SK-N-SH (cell line): ENCODE measurements at regions of chr2 and their contacts with region 1.

Region 1: DNA sequence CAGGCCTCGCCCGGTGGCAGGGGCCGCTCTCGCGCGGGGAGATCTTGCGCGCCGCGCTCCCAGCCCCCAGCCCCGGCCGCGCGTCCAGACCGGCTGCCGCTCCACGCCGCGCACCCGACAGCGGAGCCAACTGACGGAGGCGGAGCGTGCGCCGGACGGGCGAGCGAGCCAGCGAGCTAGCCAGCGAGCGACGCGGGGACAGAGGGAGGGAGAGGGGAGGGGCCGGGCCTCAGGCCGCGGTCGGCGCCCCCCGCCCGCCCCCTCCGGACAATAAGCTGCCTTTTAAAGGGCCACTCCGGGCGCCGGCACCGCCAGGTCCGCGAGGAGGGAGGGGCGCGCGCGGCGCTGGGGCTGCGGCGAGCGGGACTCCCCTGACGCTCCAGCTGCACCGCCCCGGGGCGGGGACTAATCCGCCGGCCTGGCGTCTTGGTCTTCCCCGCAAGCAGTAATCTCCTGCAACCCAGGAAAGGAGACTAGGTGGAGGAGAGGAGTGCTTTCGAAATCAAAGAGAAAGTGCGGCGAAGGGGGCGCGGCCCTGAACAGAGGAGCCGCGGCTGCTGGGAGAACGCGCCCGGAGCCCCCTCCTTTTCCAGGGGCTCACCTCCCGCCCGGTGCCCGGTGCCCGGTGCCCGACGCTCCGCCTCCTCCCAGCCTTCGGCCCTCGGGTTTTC is at the start of gene BIN1:
- DNase-seq: peak; percentile 92
- H3K4me3 ChIP-seq: peak within 1 kb of the TSS; percentile 76 to 87
- H3K27ac ChIP-seq: peak within 1 kb of the TSS; percentile 60 to 90
- H3K4me1 ChIP-seq: peaks cover 17 to 45% of the 10 kb centered on the region in 2 experiments
- H3K27me3 ChIP-seq: no peaks in the 10 kb centered on the region
- CTCF ChIP-seq: no peak
- EP300 ChIP-seq: no peak
- RAD21 ChIP-seq: no peak
- polyA plus RNA-seq, gene BIN1: 31.5 and 40.3 TPM in 2 replicates

Region 2: DNA sequence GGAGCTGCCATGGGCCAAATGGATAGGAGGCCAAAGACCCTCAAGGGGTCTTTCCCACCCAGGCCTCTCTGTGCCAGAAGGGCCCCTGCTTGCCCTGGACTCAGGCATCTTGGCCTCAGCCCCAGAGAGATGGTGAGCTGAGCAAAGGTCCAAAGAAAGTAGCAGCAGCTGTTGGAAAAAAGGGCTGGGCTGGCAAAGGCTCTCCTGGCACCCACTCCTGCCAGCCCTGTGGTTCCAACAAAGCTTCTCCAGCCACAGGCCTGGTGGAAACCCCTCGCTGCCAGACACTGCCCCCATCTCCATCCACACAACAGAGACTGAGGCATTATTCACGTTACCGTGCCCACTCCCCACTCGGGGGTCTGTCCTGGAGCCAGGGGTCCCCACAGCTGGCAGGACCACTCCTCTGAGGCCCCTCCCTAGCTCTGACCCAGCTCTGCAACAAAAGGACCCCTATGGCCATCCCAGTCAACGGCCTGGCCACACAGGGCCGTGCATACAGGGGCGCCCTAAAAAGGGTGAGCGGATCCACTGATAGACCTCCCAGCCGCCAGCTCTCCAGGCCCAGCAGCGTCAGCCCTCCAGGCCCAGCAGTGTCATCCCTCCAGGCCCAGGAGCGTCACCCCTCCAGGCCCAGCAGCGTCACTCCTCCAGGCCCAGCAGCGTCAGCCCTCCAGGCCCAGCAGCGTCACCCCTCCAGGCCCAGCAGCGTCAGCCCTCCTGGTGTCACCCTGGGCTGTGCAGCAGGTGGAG is 10.2 kb before region 1 on chr2:
- CTCF ChIA-PET with region 1: interaction called, 7 read pairs
- POLR2A ChIA-PET with region 1: interaction called, 10 read pairs
- DNase-seq: no peak
- H3K4me3 ChIP-seq: no peak overlapping the region
- H3K27ac ChIP-seq: no peak overlapping the region; a peak in 1 of 4 replicates
- H3K4me1 ChIP-seq: peaks cover 0 to 46% of the 10 kb centered on the region in 2 experiments; a peak in 1 of 4 replicates
- H3K27me3 ChIP-seq: no peaks in the 10 kb centered on the region
- CTCF ChIP-seq: no peak
- EP300 ChIP-seq: no peak
- RAD21 ChIP-seq: no peak

Region 3: DNA sequence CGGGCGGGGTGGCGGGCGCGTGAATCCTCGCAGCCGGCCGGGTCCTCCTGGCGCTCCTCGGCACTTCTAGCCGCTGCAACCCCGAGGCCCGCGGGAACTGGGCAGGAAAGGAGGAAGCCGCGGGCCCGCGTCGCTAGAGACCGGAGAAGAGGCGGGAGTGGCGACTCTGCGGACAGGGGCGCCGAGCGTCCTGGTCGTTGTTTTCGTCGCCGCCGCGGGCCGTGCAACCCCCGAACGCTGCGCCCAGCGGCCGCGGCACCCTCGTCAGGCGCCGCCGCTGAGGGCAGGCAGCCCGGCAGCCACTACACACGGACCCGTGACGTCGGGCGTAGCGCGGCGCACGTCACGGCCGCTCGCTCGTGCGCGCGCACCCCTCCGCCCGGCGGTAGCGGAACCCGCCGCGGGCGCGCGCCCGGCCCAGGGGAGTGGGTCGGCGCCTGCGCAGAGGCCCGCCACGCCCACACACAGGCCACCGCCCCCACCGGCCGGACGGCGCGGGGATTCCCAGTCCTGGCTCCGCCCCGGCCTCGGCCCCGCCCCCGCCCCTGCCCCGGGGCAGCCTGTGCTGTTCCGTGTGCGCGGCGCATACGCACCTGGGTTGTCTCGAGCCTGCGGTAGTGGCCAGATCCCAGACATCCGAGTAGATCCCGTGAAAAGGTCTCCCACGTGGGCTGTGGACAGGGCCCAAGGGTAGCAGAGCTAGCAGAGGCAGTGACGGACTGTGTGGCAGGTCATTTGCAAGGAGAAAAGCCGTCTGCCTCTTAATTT is 280.8 kb after region 1 on chr2 and contains the start of gene MAP3K2:
- CTCF ChIA-PET with region 1: no interaction called
- POLR2A ChIA-PET with region 1: no interaction called
- DNase-seq: peak; percentile 100
- H3K4me3 ChIP-seq: peak within 1 kb of the TSS; percentile 76 to 89
- H3K27ac ChIP-seq: peak within 1 kb of the TSS; percentile 95 to 96
- H3K4me1 ChIP-seq: peaks cover 10 to 16% of the 10 kb centered on the region in 2 experiments; a peak in 3 of 4 replicates
- H3K27me3 ChIP-seq: no peaks in the 10 kb centered on the region
- CTCF ChIP-seq: no peak
- EP300 ChIP-seq: 0 out of 4 replicates have a peak, but pooled peaks of 1 of the 2 experiments have one; percentile 0
- RAD21 ChIP-seq: no peak
- polyA plus RNA-seq, gene MAP3K2: 2.7 and 4.0 TPM in 2 replicates